Heart right ventricle (tissue), 16 donors: ENCODE measurements at regions of chr22 and their contacts with region 1.

Region 1: DNA sequence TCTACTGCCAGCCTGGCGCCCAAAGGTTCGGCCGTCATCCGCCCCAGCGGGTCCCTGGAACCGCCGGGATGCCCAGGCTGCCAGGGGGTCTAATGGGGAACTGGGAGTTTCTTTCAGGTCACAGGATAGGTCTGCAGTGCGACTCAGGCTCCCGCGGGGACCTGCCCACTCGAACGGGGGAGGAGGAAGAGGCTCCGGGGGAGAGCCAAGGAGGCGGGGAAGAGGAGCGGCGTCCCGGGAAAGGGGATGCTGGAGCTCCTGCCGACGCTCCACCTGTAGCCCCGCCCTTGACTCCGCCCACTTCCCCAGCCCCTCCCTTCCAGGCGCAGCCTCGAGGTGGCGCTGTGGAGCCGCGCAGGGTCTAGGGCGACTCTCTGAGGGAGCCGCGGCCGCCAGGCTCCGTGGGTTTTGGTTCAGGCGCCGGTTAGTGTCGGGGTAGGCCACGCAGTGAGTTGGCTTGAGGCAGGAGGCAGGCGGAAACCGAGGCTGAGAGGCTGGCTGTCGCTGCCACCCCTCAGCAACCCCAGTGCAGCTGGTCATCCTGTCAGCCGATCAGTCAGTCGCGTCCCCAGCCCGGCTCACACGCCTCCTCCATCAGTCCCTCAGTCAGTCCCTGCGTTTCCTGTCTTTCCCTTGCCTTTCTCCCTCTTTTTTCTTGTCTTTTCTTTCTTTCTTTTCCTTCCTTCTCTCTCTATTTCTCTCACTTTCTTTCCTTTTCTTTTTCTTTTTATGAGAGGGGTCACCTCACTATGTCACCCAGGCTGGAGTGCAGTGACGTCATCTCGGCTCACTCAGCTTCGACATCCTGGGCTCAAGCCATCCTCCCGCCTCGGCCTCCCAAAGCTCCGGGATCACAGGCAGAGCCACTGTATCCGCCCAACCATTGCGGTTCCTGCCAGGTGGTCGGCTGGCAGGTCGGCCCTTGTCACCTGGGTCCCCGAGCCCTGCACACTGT is 26.4 kb downstream of the YWHAH start:
- DNase-seq: peak; percentile 74 to 86
- ATAC-seq: peak; percentile 94 to 98 (median 96)
- H3K4me3 ChIP-seq: peak overlapping the region in 9 of 10 donors; percentile 26 to 57 (median 48)
- H3K27ac ChIP-seq: peak overlapping the region in 3 of 10 donors; percentile 16 to 43 (median 17)
- H3K4me1 ChIP-seq: peaks cover 3 to 21% (median 11%) of the 10 kb centered on the region in 9 donors
- H3K27me3 ChIP-seq: no peaks in the 10 kb centered on the region
- CTCF ChIP-seq: peak; percentile 92 to 96 (median 94)

Region 2: GRCh38 chr22:31661851-31662656 is 308.7 kb before region 1 on chr22 and contains the start of gene PISD:
- intact Hi-C with region 1: loop called in 1 of 10 experiments (anchors 10 kb)
- DNase-seq: peak; percentile 95
- ATAC-seq: peak; percentile 98 to 100 (median 100)
- H3K4me3 ChIP-seq: peak within 1 kb of the TSS; percentile 56 to 99 (median 90)
- H3K27ac ChIP-seq: peak within 1 kb of the TSS in 9 of 10 donors; percentile 24 to 81 (median 62)
- H3K4me1 ChIP-seq: peaks cover 2 to 20% (median 14%) of the 10 kb centered on the region in 9 donors
- H3K27me3 ChIP-seq: no peaks in the 10 kb centered on the region
- CTCF ChIP-seq: no peak
- total RNA-seq, gene PISD: 16.3 to 30.0 (median 18.7) TPM

Region 3: DNA sequence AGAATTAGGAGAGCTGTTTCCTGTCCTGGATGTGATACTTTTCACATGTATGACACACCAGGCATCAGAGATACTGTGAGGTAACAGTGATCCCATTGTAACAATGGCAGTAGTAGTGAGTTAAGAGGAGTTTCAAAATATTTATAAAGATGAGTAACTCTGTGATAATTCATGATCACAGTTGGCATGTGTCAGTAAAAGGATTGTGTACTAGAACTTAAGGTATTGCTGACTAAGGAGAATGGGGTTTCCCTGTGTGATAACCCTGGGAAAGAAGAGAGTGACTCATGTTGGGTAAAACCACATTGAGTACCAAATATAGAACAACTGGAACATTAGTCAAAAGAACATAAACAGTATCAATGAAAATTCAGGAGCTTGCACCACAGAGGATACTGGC is 49.4 kb after region 1 on chr22:
- intact Hi-C with region 1: no loop called
- DNase-seq: no peak
- ATAC-seq: no peak
- H3K4me3 ChIP-seq: no peak overlapping the region
- H3K27ac ChIP-seq: no peak overlapping the region
- H3K4me1 ChIP-seq: no peaks in the 10 kb centered on the region
- H3K27me3 ChIP-seq: peaks cover 0 to 6% (median 0%) of the 10 kb centered on the region in 7 donors
- CTCF ChIP-seq: no peak

Region 4: DNA sequence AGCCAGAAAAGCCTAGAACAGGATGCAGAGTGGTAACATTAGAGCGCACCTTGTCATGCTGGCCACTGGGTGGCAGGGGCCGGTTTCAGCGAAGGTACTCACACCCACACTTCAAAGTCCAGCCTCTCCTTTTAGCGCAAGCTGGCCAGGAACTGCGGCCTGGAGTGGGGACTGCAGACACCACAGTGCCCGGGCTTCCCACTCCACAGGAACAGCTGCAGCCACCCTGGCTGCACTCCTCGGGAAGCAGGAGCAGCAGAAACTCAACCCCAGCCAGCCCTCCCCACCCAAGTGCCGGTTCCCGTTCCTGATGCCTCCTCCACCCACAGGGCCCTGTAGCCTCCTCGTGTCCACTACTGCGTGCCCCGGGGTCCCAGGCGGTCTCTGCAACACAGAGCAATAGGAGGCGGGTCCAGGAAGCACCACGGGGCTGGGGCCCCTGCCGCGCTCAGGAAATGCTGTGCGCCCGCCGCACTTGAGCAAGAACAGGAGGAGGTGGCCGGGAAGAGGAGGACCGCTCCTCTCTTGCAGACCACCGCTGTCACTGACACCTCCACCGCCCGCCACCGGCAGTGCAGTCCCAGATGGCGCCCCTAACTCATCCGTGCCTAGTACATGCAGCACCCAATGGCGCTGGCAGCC is 231.9 kb after region 1 on chr22:
- intact Hi-C with region 1: loop called in 7 of 10 experiments (anchors 5 to 10 kb)
- DNase-seq: peak; percentile 18 to 39
- ATAC-seq: peak; percentile 46 to 73 (median 70)
- H3K4me3 ChIP-seq: peak overlapping the region in 8 of 10 donors; percentile 9 to 40 (median 28)
- H3K27ac ChIP-seq: no peak overlapping the region
- H3K4me1 ChIP-seq: peaks cover 0 to 15% (median 9%) of the 10 kb centered on the region in 9 donors
- H3K27me3 ChIP-seq: peaks cover 0 to 48% (median 24%) of the 10 kb centered on the region in 7 donors
- CTCF ChIP-seq: peak in 8 of 9 donors; percentile 17 to 62 (median 44)

Region 5: GRCh38 chr22:32378707-32379272 is 408.0 kb after region 1 on chr22:
- intact Hi-C with region 1: loop called in 2 of 10 experiments (anchors 10 kb)
- DNase-seq: no peak
- ATAC-seq: peak in 5 of 8 donors; percentile 25 to 44 (median 38)
- H3K4me3 ChIP-seq: no peak overlapping the region
- H3K27ac ChIP-seq: no peak overlapping the region
- H3K4me1 ChIP-seq: no peaks in the 10 kb centered on the region
- H3K27me3 ChIP-seq: no peaks in the 10 kb centered on the region
- CTCF ChIP-seq: peak in 7 of 9 donors; percentile 44 to 66 (median 50)

Region 6: GRCh38 chr22:32474635-32475467 is 504.1 kb after region 1 on chr22 and contains the start of gene FBXO7:
- intact Hi-C with region 1: loop called in 6 of 10 experiments (anchors 5 to 10 kb)
- DNase-seq: peak; percentile 93 to 94
- ATAC-seq: peak; percentile 92 to 95 (median 94)
- H3K4me3 ChIP-seq: peak within 1 kb of the TSS; percentile 71 to 100 (median 89)
- H3K27ac ChIP-seq: peak within 1 kb of the TSS; percentile 97 to 100 (median 99)
- H3K4me1 ChIP-seq: peaks cover 0 to 49% (median 31%) of the 10 kb centered on the region in 9 donors
- H3K27me3 ChIP-seq: no peaks in the 10 kb centered on the region
- CTCF ChIP-seq: peak in 6 of 9 donors; percentile 27 to 72 (median 51)
- total RNA-seq, gene FBXO7: 34.3 to 52.2 (median 38.9) TPM